ENCODE measurements at regions of chr15 and their contacts with region 1.

Region 1: DNA sequence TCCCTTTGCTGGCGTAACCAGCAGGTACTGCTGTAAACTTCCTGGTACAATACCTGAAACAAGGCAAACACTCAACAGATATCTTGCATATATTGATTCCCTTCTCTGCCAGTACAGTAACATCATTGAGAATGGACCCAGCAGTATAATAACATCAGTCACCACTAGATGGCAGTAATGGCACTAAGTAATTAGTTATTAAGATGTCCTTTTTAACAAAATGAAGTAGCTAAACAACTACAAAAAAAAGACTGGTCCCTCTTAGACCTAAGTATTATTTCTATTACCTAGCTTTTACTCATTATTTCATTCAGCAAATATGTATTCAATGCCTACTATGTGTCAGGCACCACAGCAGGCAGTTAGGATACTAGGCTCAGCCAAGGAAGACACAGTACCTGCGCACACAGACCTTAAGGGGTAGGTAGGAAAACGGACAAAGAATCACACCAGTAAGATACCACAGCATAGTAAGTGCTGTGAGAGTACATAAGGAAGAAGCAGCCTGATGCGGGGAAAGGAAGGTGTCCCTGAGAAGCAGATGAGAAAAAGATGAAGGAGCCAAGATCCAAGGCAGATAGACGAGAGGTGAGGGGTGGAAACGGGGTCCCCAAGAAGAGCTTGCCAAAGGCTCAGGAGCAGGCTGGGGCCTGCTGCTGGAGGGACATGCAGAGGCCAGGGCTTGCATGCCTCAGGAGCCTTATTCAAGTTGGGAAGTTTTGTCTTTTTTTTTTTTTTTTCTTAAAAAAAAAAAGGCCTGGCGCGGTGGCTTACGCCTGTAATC is 102.8 kb upstream of the CHD2 start:
- DNase-seq: peak in 1 of 3 donors; percentile 87
- ATAC-seq: peak; percentile 88
- H3K4me3 ChIP-seq: no peak overlapping the region
- H3K4me1 ChIP-seq: peaks cover 5% of the 10 kb centered on the region
- CTCF ChIP-seq: peak; percentile 52

Region 2: GRCh38 chr15:92611993-92612745 is 185.2 kb before region 1 on chr15:
- intact Hi-C with region 1: no loop called
- DNase-seq: no peak
- ATAC-seq: peak; percentile 28
- H3K4me3 ChIP-seq: no peak overlapping the region
- H3K4me1 ChIP-seq: peaks cover 6% of the 10 kb centered on the region
- CTCF ChIP-seq: no peak

Region 3: DNA sequence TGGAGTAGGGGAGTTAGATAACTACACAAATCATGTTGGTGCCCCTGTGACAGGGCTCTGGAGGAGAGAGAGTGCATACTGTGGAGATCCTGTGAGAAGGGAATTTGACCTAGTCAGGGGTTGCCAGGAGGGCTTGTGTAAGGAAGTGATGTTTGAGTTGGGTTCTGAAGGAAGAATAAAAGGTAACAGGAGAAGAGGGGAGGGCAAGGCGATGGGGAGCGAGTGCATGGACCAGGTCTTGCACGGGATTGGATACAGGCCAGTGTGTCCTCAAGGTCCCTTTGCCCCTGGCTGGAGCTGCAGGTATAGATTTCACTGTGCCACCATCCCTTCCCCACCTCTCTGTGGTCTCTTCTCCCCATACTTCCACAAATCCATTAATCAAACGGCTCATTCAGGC is 207.8 kb after region 1 on chr15:
- intact Hi-C with region 1: loop called in 1 of 2 experiments (anchors 5 kb)
- DNase-seq: no peak
- ATAC-seq: no peak
- H3K4me3 ChIP-seq: no peak overlapping the region
- H3K4me1 ChIP-seq: no peaks in the 10 kb centered on the region
- CTCF ChIP-seq: no peak

Measured in mucosa of descending colon (tissue), 3 donors.